ENCODE measurements at regions of chr9 and their contacts with region 1.

Region 1: DNA sequence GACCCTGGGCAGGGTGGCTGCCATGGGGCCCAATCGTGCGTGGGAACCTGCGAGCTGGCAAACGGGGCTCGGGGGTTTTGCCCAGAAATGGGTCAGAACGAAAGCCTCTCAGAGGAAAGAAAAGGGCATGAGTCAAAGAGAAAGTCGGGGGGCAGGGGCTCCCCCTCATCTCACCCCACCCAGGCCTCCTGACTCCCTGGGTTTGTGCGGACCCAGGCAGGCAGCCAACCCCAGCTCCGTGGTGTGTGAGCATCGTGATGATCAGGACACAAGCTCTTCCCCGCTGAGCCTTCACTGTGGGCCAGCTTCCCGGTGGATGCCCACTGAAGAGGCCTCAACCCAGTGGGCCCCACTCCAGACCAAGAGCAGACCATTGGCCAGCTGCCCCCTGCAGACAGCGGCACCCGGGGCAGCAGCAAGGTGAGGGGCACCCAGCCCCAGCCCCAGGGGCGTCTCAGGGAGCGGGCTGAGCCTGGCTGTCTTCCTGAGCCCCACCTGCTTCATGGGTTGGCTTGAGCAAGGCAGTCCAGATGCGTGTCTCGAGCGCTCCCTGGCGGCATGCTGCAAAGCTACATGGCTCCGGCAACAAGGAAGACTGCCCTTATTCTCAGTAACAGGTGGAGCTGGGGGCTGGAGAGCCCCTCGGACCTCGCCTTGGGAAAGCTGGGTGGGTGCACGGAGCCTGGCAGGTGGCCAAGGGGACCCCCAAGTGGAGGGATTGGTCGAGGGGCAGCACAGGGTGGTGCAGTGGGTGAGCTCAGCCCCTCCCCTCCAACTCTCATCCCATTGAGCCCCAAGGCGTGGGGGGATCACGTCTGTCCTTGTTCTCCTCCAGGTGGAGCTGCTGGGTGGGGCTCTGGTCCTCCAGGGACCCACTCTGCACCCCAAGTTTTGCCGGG is 3.2 kb upstream of the FUT7 start:
- DNase-seq: peak; percentile 90

Region 2: GRCh38 chr9:136949817-136950655 is 85.1 kb before region 1 on chr9:
- CTCF ChIA-PET with region 1: interaction called, 45 read pairs
- POLR2A ChIA-PET with region 1: interaction called, 14 read pairs
- DNase-seq: peak; percentile 98

Region 3: GRCh38 chr9:137046098-137046787 is 11.1 kb after region 1 on chr9 and contains the start of gene NPDC1:
- CTCF ChIA-PET with region 1: interaction called, 17 read pairs
- POLR2A ChIA-PET with region 1: no interaction called
- DNase-seq: peak; percentile 93

Region 4: GRCh38 chr9:137114220-137114609 is 79.1 kb after region 1 on chr9:
- CTCF ChIA-PET with region 1: no interaction called
- POLR2A ChIA-PET with region 1: no interaction called
- DNase-seq: no peak

Measured in HEK293T (cell line).